ENCODE measurements at regions of chr5 and their contacts with region 1.

Region 1: GRCh38 chr5:96785326-96786109 is 22.2 kb downstream of the ERAP1 start:
- DNase-seq: no peak
- H3K4me3 ChIP-seq: no peak overlapping the region
- H3K4me3 Mint-ChIP-seq: no peak overlapping the region
- H3K27ac ChIP-seq: no peak overlapping the region
- H3K27ac Mint-ChIP-seq: peak overlapping the region; percentile 20 to 78 (median 72)
- H3K4me1 ChIP-seq: no peaks in the 10 kb centered on the region
- H3K4me1 Mint-ChIP-seq: peaks cover 5 to 12% (median 6%) of the 10 kb centered on the region in 4 donors
- H3K27me3 ChIP-seq: no peaks in the 10 kb centered on the region
- H3K27me3 Mint-ChIP-seq: no peaks in the 10 kb centered on the region

Region 2: GRCh38 chr5:96771395-96771794 is 14.1 kb before region 1 on chr5:
- CTCF ChIA-PET with region 1: interaction called, 10 read pairs
- POLR2A ChIA-PET with region 1: interaction called, 3 read pairs
- intact Hi-C with region 1: no loop called
- DNase-seq: no peak
- H3K4me3 ChIP-seq: no peak overlapping the region
- H3K4me3 Mint-ChIP-seq: peak overlapping the region in 1 of 8 donors; percentile 5
- H3K27ac ChIP-seq: no peak overlapping the region
- H3K27ac Mint-ChIP-seq: peak overlapping the region; percentile 57 to 86 (median 74)
- H3K4me1 ChIP-seq: peaks cover 10% of the 10 kb centered on the region
- H3K4me1 Mint-ChIP-seq: peaks cover 8 to 18% (median 15%) of the 10 kb centered on the region in 4 donors
- H3K27me3 ChIP-seq: no peaks in the 10 kb centered on the region
- H3K27me3 Mint-ChIP-seq: no peaks in the 10 kb centered on the region